ENCODE measurements at regions of chr10 and their contacts with region 1.

Region 1: GRCh38 chr10:47261121-47261520 is 38.9 kb upstream of the GDF10 start:
- DNase-seq: peak; percentile 63
- H3K4me3 Mint-ChIP-seq: peak overlapping the region; percentile 36
- H3K27ac Mint-ChIP-seq: peak overlapping the region; percentile 96
- H3K4me1 Mint-ChIP-seq: peaks cover 91% of the 10 kb centered on the region
- H3K27me3 Mint-ChIP-seq: peaks cover 1% of the 10 kb centered on the region

Region 2: GRCh38 chr10:47159938-47160908 is 100.9 kb before region 1 on chr10:
- CTCF ChIA-PET with region 1: no interaction called
- POLR2A ChIA-PET with region 1: no interaction called
- intact Hi-C with region 1: loop called (anchors 1 kb)
- DNase-seq: no peak
- H3K4me3 Mint-ChIP-seq: no peak overlapping the region
- H3K27ac Mint-ChIP-seq: no peak overlapping the region
- H3K4me1 Mint-ChIP-seq: peaks cover 12% of the 10 kb centered on the region
- H3K27me3 Mint-ChIP-seq: no peaks in the 10 kb centered on the region

Region 3: GRCh38 chr10:47195274-47195885 is 65.7 kb before region 1 on chr10:
- CTCF ChIA-PET with region 1: no interaction called
- POLR2A ChIA-PET with region 1: no interaction called
- intact Hi-C with region 1: loop called (anchors 1 kb)
- DNase-seq: peak; percentile 63
- H3K4me3 Mint-ChIP-seq: peak overlapping the region; percentile 10
- H3K27ac Mint-ChIP-seq: peak overlapping the region; percentile 76
- H3K4me1 Mint-ChIP-seq: peaks cover 14% of the 10 kb centered on the region
- H3K27me3 Mint-ChIP-seq: no peaks in the 10 kb centered on the region

Region 4: DNA sequence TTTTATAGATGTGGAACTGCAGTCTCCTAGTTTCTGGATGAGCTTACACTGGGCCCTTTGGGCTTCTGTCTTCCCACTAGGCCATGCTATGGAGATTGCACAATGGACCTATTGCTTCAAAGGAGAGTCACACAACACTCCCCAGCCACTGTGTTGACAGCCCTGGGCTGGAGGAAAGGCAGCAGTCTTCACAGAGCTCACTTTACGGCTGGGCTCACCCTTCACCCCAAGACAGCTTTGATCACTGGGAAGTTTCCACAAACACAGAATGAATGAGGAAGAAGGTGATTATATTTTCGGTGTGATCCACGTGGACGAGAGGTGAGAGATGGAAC is 53.9 kb before region 1 on chr10:
- CTCF ChIA-PET with region 1: interaction called, 3 read pairs
- POLR2A ChIA-PET with region 1: no interaction called
- intact Hi-C with region 1: loop called (anchors 2 kb)
- DNase-seq: peak; percentile 33
- H3K4me3 Mint-ChIP-seq: peak overlapping the region; percentile 31
- H3K27ac Mint-ChIP-seq: peak overlapping the region; percentile 71
- H3K4me1 Mint-ChIP-seq: peaks cover 64% of the 10 kb centered on the region
- H3K27me3 Mint-ChIP-seq: no peaks in the 10 kb centered on the region

Region 5: DNA sequence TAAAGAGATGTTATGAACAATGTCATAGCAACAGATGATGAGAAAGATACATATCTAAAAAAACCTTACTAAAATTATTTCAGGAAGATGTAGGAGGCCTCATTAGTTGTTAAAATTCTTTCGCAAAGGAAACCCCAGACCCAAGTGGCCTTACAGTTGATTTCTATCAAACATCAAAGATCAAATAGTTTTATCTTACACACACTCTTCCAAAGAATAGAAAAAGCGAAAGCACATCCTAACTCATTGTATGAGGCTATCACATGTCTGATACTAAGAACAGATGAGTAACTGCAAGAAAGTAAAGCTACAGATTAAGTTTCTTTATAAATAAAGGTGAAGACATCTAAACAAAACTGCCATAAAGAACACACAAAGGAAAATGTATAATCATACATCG is 44.0 kb before region 1 on chr10:
- CTCF ChIA-PET with region 1: interaction called, 3 read pairs
- POLR2A ChIA-PET with region 1: no interaction called
- intact Hi-C with region 1: loop called (anchors 2 kb)
- DNase-seq: no peak
- H3K4me3 Mint-ChIP-seq: no peak overlapping the region
- H3K27ac Mint-ChIP-seq: peak overlapping the region; percentile 49
- H3K4me1 Mint-ChIP-seq: peaks cover 32% of the 10 kb centered on the region
- H3K27me3 Mint-ChIP-seq: no peaks in the 10 kb centered on the region

Region 6: DNA sequence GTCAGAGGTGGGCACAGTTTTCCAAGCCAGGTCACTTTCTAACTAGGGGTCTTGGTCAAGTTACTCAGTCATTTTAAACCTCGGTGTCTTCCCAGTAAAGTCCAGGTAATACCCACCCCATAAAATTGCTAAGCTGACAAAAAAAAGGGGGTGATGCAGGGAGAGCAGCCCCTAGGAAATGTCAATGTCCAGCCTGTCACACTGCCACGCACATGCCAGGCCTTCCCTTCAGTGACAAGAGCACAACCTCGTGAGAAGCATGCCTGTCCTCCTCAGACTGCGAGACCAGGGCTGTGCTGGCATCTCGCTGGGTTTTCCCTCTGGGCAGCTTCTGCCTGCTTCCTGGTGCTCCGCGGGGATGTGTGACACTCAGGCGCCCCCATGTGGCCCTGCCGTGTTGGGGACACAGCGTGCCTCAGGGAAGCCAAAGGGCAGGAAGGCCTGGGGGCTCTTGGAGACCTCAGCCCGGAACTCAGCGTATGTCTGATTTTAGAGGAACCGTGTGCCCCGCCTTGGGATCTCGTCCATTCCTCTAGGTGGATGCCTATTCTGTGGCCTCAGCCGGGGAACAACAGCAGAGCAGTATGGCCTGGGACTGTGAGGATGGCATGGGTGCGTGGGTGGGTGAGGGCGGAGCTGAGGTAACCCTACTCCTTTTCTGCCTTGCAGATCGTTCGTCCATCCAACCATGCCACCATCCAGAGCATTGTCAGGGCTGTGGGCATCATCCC is 51.0 kb after region 1 on chr10:
- CTCF ChIA-PET with region 1: interaction called, 11 read pairs
- POLR2A ChIA-PET with region 1: no interaction called
- intact Hi-C with region 1: loop called (anchors 1 kb)
- DNase-seq: peak; percentile 91
- H3K4me3 Mint-ChIP-seq: no peak overlapping the region
- H3K27ac Mint-ChIP-seq: peak overlapping the region; percentile 51
- H3K4me1 Mint-ChIP-seq: peaks cover 22% of the 10 kb centered on the region
- H3K27me3 Mint-ChIP-seq: no peaks in the 10 kb centered on the region

Measured in activated CD4-positive, alpha-beta memory T cell treated with anti-CD3 and anti-CD28 coated beads for 36 hours (primary cell).